ENCODE measurements at regions of chr1 and their contacts with region 1.

Region 1: GRCh38 chr1:85502625-85503083 is 37.7 kb upstream of the DDAH1 start:
- DNase-seq: peak; percentile 61 to 88 (median 71)
- H3K4me3 ChIP-seq: no peak overlapping the region
- H3K27ac ChIP-seq: no peak overlapping the region
- H3K4me1 ChIP-seq: no peaks in the 10 kb centered on the region
- H3K27me3 ChIP-seq: no peaks in the 10 kb centered on the region
- CTCF ChIP-seq: peak; percentile 57 to 75 (median 66)
- POLR2A ChIP-seq: no peak

Region 2: DNA sequence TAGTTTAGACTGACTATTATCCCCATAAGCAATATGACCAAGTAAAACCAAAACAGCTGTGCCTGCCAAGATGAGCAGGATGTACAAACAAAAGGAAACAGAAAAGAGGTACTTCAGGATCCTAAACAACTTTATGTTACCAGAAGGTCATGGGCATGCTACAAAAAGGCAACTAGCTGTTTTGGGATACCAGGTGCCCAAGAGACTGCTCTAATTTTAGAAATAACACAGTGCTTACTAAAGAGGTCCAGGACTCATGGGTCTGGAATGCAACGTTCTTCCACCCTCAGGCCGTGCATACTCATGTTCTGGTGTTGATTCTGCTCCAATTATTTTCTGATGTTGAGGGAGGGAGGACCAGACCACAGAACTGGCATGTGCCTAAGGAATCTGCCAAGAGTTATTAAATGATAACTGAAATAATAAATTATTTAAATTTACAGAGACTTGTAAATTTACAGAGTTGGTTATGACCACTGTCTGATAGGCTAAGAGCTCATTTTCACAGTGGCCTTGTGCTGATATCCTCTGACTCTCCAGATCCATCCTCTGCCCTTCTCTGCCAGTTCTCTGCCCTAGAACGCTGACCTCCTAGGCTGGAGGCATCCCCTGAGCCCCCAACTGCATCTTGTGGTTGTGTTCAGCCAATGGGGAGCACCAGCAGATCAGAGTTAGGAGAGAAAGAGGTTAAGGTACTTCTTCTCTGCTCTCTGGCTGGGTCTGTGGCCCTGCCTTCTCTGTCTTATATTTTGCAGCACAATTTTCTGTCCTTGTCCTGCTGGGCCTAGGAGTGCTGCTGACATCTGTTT is 188.6 kb before region 1 on chr1:
- intact Hi-C with region 1: loop called (anchors 5 kb)
- DNase-seq: peak in 5 of 7 donors; percentile 18 to 60 (median 44)
- H3K4me3 ChIP-seq: no peak overlapping the region
- H3K27ac ChIP-seq: peak overlapping the region in 2 of 5 donors; percentile 33 to 68
- H3K4me1 ChIP-seq: peaks cover 9% of the 10 kb centered on the region in 2 donors
- H3K27me3 ChIP-seq: no peaks in the 10 kb centered on the region
- CTCF ChIP-seq: no peak
- POLR2A ChIP-seq: no peak

Region 3: GRCh38 chr1:85351202-85351828 is 151.3 kb before region 1 on chr1:
- intact Hi-C with region 1: no loop called
- DNase-seq: no peak
- H3K4me3 ChIP-seq: no peak overlapping the region
- H3K27ac ChIP-seq: no peak overlapping the region
- H3K4me1 ChIP-seq: no peaks in the 10 kb centered on the region
- H3K27me3 ChIP-seq: no peaks in the 10 kb centered on the region
- CTCF ChIP-seq: no peak
- POLR2A ChIP-seq: no peak

Region 4: GRCh38 chr1:85406887-85407533 is 95.6 kb before region 1 on chr1:
- intact Hi-C with region 1: loop called in 1 of 2 experiments (anchors 5 kb)
- DNase-seq: peak; percentile 45 to 78 (median 68)
- H3K4me3 ChIP-seq: peak overlapping the region in 1 of 4 donors; percentile 17
- H3K27ac ChIP-seq: peak overlapping the region; percentile 17 to 61 (median 41)
- H3K4me1 ChIP-seq: peaks cover 8 to 17% of the 10 kb centered on the region in 2 donors
- H3K27me3 ChIP-seq: no peaks in the 10 kb centered on the region
- CTCF ChIP-seq: no peak
- POLR2A ChIP-seq: no peak